ENCODE measurements at regions of chr4 and their contacts with region 1.

Region 1: DNA sequence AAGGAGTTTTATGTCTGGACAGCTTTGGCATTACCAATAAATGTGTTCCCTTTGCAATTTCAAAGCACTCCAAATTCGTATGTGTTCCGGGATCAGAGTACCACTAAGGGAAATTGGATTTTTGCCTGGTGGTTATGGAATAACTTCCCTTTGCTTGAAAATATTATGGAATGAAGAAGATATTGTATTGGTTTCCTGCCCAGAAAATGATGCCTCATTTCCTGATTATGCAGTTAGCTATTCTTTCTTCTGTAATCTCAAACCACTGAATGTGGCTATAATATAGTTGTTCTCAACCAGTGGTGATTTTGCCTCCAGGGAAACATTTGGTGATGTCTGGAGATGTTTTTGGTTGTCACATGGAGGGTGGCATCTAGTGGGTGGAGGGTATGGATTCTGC is 142.9 kb downstream of the PCDH7 start:
- DNase-seq: no peak
- H3K4me3 ChIP-seq: no peak overlapping the region
- H3K27ac ChIP-seq: peak overlapping the region; percentile 37 to 78 (median 62)
- H3K4me1 ChIP-seq: peaks cover 0 to 84% (median 61%) of the 10 kb centered on the region in 4 donors
- H3K27me3 ChIP-seq: no peaks in the 10 kb centered on the region
- CTCF ChIP-seq: no peak
- EP300 ChIP-seq: no peak
- POLR2A ChIP-seq: no peak

Region 2: GRCh38 chr4:30619679-30620078 is 243.3 kb before region 1 on chr4:
- intact Hi-C with region 1: no loop called
- DNase-seq: no peak
- H3K4me3 ChIP-seq: no peak overlapping the region
- H3K27ac ChIP-seq: no peak overlapping the region
- H3K4me1 ChIP-seq: no peaks in the 10 kb centered on the region
- H3K27me3 ChIP-seq: no peaks in the 10 kb centered on the region
- CTCF ChIP-seq: no peak
- EP300 ChIP-seq: no peak
- POLR2A ChIP-seq: no peak

Region 3: GRCh38 chr4:30757357-30757756 is 105.7 kb before region 1 on chr4:
- intact Hi-C with region 1: loop called (anchors 10 kb)
- DNase-seq: no peak
- H3K4me3 ChIP-seq: no peak overlapping the region
- H3K27ac ChIP-seq: peak overlapping the region in 2 of 4 donors; percentile 2 to 10
- H3K4me1 ChIP-seq: peaks cover 0 to 59% (median 34%) of the 10 kb centered on the region in 4 donors
- H3K27me3 ChIP-seq: no peaks in the 10 kb centered on the region
- CTCF ChIP-seq: no peak
- EP300 ChIP-seq: no peak
- POLR2A ChIP-seq: no peak

Region 4: DNA sequence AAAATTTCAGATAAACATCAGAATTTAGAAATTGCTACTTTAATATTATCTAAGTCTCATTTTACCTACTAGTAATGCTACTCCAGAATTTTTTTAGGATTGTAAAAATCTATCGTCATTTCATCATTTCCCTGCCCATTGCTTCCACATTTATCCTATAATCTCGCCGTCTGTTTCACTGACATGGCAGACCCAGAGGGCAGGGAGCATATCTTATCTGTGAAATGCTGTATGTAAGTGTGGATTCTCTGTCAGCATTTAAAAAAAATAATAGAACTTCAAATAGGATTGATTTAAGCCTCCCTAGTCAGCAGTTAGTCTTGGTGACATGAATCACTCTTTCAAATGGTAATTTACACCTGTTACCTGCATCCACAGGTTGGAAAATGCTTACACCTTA is 171.5 kb after region 1 on chr4:
- intact Hi-C with region 1: no loop called
- DNase-seq: no peak
- H3K4me3 ChIP-seq: no peak overlapping the region
- H3K27ac ChIP-seq: no peak overlapping the region
- H3K4me1 ChIP-seq: peaks cover 0 to under 1% (median 0%) of the 10 kb centered on the region in 4 donors
- H3K27me3 ChIP-seq: no peaks in the 10 kb centered on the region
- CTCF ChIP-seq: no peak
- EP300 ChIP-seq: no peak
- POLR2A ChIP-seq: no peak

Measured in sigmoid colon (tissue), 7 donors.